Heart right ventricle (tissue), 16 donors: ENCODE measurements at regions of chr7 and their contacts with region 1.

Region 1: GRCh38 chr7:157211690-157212089 is 73.0 kb downstream of the UBE3C start:
- DNase-seq: no peak
- ATAC-seq: no peak
- H3K4me3 ChIP-seq: no peak overlapping the region
- H3K27ac ChIP-seq: no peak overlapping the region
- H3K4me1 ChIP-seq: peaks cover 0 to 9% (median 0%) of the 10 kb centered on the region in 9 donors
- H3K27me3 ChIP-seq: no peaks in the 10 kb centered on the region
- CTCF ChIP-seq: no peak

Region 2: GRCh38 chr7:157177983-157178381 is 33.7 kb before region 1 on chr7:
- intact Hi-C with region 1: loop called in 1 of 10 experiments (anchors 5 kb)
- DNase-seq: no peak
- ATAC-seq: no peak
- H3K4me3 ChIP-seq: no peak overlapping the region
- H3K27ac ChIP-seq: no peak overlapping the region
- H3K4me1 ChIP-seq: no peaks in the 10 kb centered on the region
- H3K27me3 ChIP-seq: no peaks in the 10 kb centered on the region
- CTCF ChIP-seq: no peak

Region 3: GRCh38 chr7:157248659-157249058 is 37.0 kb after region 1 on chr7:
- intact Hi-C with region 1: no loop called
- DNase-seq: no peak
- ATAC-seq: peak in 2 of 8 donors; percentile 14 to 41
- H3K4me3 ChIP-seq: no peak overlapping the region
- H3K27ac ChIP-seq: no peak overlapping the region
- H3K4me1 ChIP-seq: no peaks in the 10 kb centered on the region
- H3K27me3 ChIP-seq: no peaks in the 10 kb centered on the region
- CTCF ChIP-seq: no peak

Region 4: DNA sequence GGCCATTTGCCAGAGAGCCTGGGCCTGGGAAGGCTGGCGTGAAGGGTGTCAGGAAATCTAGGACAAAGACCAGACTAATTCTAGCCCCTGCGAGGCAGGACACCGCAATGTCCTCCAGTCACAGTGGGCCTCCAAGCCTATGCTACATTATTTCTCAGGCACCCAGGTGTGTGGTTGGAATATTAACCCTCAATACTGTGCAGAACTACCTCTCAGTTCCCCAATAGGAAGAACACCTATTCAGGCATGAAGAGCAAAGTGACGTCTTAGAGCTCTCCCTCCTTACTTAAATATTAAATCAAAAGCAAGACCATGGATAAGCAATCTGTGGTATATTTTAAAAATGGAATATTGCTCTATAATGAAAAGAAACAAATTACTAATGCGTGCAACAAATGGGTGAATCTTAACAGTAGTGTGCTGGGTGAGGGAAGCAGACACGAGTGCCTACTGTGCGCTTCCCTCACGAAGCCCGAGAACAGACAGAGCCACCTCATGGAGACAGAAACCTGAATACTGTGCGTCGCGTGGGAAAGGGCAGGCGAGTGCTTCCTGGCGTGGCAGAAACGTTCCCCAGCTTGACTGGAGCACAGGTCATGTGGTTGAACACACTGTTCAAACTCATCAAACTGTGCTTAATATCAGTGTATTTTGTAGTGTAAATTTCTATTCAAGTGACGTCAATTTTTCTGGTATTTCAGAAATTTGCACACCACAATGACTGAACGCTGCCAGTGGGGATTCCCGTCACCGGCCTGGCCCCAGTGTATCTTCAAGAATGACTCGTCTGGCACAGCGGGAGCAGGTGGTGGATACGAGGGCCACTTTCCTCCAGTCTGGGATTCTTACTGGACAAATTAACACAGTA is 1391.4 kb after region 1 on chr7:
- intact Hi-C with region 1: no loop called
- DNase-seq: no peak
- ATAC-seq: no peak
- H3K4me3 ChIP-seq: no peak overlapping the region
- H3K27ac ChIP-seq: no peak overlapping the region
- H3K4me1 ChIP-seq: no peaks in the 10 kb centered on the region
- H3K27me3 ChIP-seq: no peaks in the 10 kb centered on the region
- CTCF ChIP-seq: no peak